ENCODE measurements at regions of chr5 and their contacts with region 1.

Region 1: DNA sequence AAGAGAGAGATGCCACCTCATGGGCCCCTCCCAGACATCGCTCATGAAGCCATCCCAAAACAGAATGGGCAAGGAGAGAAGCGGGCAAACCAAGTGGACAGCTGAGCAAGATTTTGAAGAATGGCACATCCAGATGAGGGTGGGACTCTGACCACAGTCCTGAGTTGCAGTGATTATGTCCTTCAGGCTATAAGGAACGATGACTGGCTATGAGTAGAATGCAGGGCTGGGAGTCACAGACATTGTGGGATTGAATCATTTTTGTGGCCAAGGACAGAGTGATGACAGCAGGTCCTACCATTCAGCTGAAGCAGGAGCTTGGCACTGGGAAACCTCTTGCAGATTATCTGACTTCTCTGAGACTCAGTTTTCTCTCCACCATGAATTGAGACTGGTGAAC is 245.7 kb upstream of the SLC30A5 start:
- DNase-seq: peak; percentile 85
- H3K4me3 ChIP-seq: no peak overlapping the region
- H3K27ac ChIP-seq: no peak overlapping the region
- H3K4me1 ChIP-seq: peaks cover 16% of the 10 kb centered on the region
- H3K27me3 ChIP-seq: no peaks in the 10 kb centered on the region
- CTCF ChIP-seq: no peak

Region 2: GRCh38 chr5:68279984-68280383 is 568.1 kb before region 1 on chr5:
- CTCF ChIA-PET with region 1: no interaction called
- dilution Hi-C with region 1: loop called (anchors 5 kb)
- in situ Hi-C with region 1: no loop called
- intact Hi-C with region 1: no loop called
- DNase-seq: no peak
- H3K4me3 ChIP-seq: no peak overlapping the region
- H3K27ac ChIP-seq: no peak overlapping the region
- H3K4me1 ChIP-seq: peaks cover 19% of the 10 kb centered on the region
- H3K27me3 ChIP-seq: no peaks in the 10 kb centered on the region
- CTCF ChIP-seq: no peak

Region 3: DNA sequence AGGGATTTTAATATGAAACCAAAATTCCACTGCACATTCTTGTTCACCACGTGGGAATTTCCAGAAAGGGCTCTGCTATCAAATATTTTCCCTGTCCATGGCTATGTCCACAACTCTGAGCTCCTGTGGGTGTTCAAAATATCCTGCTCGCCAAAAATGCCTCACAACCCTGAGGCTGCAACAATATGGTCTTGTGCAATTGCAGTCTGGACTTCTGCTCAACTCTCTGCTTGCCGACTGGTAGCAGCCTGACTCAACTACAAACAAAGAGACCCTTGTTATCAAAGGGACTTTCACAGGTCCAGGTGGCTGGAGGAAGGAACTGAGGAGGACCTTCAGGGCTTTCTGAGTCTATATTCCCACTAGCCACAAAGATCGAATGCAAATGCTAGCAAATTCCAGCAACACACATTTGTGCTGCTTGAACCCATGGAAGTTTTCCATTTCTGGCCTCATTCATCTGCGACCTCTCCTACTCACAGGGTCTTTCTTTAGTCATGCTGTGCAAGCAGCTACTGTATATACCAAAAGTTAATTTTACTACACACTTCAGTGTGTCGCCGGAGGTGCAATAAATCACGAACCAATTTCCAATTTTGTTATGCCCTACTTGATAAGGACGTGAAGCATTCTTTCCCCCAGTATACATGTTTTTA is 76.5 kb after region 1 on chr5:
- CTCF ChIA-PET with region 1: no interaction called
- dilution Hi-C with region 1: no loop called
- in situ Hi-C with region 1: no loop called
- intact Hi-C with region 1: no loop called
- DNase-seq: peak; percentile 98
- H3K4me3 ChIP-seq: no peak overlapping the region
- H3K27ac ChIP-seq: peak overlapping the region; percentile 40
- H3K4me1 ChIP-seq: peaks cover 16% of the 10 kb centered on the region
- H3K27me3 ChIP-seq: no peaks in the 10 kb centered on the region
- CTCF ChIP-seq: no peak